Endothelial cell of umbilical vein (primary cell): ENCODE measurements at regions of chr7 and their contacts with region 1.

Region 1: DNA sequence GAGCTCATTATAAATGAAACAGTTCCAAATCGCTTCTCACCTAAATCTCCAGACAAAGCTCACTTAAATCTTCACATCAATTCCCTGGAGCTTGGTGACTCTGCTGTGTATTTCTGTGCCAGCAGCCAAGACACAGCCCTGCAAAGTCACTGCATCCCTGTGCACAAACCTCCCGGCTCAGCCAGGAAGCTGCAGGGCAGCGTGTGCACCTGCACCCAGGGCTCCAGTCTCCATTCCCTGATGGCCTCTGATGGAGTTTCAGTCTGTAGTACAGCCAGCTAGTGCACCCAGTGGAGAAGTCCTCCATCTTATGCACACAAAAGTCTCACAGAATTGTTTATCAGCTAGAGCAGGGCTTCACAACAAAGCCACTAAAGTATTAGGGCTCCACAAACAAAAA is 51.1 kb upstream of the PRSS58 start:
- DNase-seq: no peak
- H3K4me3 ChIP-seq: no peak overlapping the region
- H3K27ac ChIP-seq: no peak overlapping the region
- H3K4me1 ChIP-seq: no peaks in the 10 kb centered on the region
- H3K27me3 ChIP-seq: no peaks in the 10 kb centered on the region
- CTCF ChIP-seq: no peak
- POLR2A ChIP-seq: no peak

Region 2: DNA sequence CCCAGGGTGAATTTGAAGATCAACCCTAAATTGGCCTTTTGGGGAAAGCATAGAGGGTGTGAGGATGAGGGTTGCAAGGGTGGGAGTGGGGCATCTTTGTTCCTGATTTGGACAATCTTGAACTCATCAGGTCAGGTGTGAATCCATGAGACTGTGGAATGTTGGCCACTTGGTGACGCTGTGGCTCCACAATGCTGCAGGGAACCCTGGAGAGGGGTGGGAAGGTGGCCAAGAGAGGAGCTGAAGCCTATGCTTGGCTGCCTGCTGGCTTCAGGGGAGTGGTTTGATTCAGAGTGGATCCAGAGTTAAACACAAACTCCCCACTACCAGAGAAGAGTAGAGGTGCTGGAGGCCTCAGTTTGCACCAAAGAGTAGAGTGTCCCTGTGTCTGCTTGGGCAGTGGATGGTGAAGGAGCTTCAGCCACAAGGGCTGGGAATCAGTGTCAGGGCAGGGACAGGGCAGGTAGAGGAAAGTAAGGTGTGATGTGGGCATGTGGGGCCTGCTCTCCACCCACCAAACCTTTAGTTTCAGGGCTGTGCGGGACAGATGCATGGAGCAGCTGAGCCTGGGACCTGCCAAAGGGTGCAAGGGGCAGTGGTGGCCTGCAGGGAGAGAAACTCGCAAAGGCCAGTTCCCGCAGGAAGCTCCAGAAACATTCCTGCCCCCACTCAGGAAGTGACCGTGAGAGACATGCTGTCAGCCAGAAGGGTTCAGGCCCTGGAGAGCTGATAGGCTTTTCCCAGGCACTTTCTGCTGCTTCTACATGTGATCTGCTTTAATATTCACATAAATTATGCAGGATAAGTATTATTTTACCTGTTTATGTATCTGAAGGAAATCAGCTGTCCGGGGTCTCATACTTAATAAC is 29.9 kb after region 1 on chr7:
- CTCF ChIA-PET with region 1: interaction called, 6 read pairs
- POLR2A ChIA-PET with region 1: no interaction called
- dilution Hi-C with region 1: no loop called
- intact Hi-C with region 1: loop called (anchors 1 kb)
- DNase-seq: no peak
- H3K4me3 ChIP-seq: no peak overlapping the region
- H3K27ac ChIP-seq: no peak overlapping the region
- H3K4me1 ChIP-seq: no peaks in the 10 kb centered on the region
- H3K27me3 ChIP-seq: no peaks in the 10 kb centered on the region
- CTCF ChIP-seq: no peak
- POLR2A ChIP-seq: no peak